Activated CD4-positive, alpha-beta memory T cell treated with anti-CD3 and anti-CD28 coated beads for 36 hours (primary cell): ENCODE measurements at regions of chr7 and their contacts with region 1.

Region 1: DNA sequence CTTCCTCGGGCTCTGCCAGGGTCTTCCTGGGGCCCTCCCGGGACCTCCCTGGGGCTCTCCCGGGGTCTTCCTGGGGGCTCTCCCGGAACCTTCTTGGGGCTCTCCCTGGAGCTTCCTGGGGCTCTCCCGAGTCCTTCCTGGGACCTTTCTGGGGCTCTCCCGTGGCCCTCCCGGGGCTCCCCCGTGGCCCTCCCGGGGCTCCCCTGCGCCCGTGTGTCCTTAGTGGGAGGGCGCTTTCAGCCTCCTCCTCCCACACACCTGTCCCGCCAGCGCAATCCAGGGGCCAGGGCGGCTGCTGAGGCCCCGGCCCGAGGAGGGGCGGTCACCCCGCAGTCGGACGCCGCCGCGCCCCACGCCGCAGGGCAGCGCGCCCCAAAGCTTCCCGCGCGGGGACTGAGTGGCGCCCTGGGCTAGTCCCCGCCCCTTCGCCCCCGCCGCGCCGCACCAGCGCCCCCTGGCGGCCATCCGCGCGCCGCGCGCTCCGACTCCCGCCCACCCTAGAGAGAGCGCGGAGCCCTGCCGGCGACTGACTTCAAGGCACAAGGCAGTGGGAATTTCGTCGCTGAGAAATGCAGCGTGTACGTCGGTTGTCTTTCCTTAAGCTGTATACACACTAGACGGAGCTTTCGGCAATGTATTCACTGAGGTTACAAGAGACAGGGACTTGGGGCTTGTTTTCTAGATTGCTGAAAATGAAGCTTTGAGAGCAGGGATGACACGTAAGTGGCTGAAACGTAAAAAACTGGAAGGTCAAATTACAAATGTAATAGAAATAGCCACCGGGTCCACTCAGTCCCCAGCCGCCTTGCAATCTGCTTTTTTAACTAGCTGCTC is 47.1 kb downstream of the INSIG1 start:
- DNase-seq: peak; percentile 85
- H3K4me3 Mint-ChIP-seq: peak overlapping the region; percentile 45
- H3K27ac Mint-ChIP-seq: no peak overlapping the region
- H3K4me1 Mint-ChIP-seq: peaks cover 7% of the 10 kb centered on the region
- H3K27me3 Mint-ChIP-seq: peaks cover 15% of the 10 kb centered on the region

Region 2: DNA sequence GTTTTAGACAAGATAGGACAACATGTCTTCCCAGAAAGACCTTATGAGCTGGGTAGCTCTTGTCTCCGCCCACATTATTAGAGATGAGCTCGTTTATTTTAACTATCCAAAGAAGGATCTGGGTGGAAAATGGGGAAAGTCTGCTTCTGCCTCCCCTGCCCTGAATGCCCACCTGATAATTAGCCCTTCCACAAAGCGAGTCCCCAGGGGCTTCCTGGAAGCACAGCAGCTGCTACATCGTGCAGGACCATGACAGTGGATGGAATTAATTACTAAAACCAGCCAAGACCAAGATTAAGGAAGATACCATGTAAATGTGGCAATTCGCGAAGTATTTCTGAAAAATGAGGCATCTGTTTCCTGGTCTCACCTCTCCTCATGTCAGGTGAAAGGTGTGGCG is 716.3 kb before region 1 on chr7:
- CTCF ChIA-PET with region 1: no interaction called
- POLR2A ChIA-PET with region 1: no interaction called
- intact Hi-C with region 1: no loop called
- DNase-seq: no peak
- H3K4me3 Mint-ChIP-seq: no peak overlapping the region
- H3K27ac Mint-ChIP-seq: no peak overlapping the region
- H3K4me1 Mint-ChIP-seq: no peaks in the 10 kb centered on the region
- H3K27me3 Mint-ChIP-seq: no peaks in the 10 kb centered on the region

Region 3: DNA sequence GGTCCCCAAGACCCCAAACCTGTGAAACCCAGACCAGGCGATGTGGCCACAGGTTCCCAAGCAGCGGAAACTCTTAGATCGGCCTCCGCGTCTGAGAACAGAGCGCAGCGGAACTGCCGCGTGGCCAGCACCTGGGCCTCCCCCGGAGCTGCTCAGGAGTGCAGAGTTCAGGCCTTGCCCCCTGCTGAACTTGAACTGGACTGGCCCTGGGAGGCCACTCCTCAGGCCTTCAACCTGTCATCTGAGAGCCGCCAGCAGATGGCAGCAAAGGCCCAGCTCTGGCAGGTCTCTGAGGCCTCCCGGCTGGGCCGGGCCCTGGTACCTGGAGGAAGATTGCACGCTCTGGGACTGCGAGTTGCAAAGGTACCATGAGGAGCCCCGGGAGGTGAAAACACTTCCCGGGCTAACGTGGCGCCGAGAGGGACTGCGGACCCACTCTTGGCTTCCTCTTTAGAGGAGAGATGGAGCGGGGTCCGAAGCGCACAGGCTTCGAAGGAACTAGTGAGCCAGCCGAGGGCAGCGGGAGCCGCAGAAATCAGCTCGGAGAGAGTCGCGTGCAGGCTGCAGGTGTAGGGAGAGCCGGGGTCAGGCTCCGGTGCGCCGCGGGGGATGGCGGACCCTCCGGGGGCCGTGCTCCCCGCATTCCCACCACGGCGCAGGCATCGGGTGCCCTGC is 431.0 kb before region 1 on chr7:
- CTCF ChIA-PET with region 1: interaction called, 22 read pairs
- POLR2A ChIA-PET with region 1: no interaction called
- intact Hi-C with region 1: no loop called
- DNase-seq: peak; percentile 90
- H3K4me3 Mint-ChIP-seq: peak overlapping the region; percentile 59
- H3K27ac Mint-ChIP-seq: no peak overlapping the region
- H3K4me1 Mint-ChIP-seq: peaks cover 4% of the 10 kb centered on the region
- H3K27me3 Mint-ChIP-seq: peaks cover 28% of the 10 kb centered on the region

Region 4: GRCh38 chr7:155003376-155004214 is 341.2 kb before region 1 on chr7:
- CTCF ChIA-PET with region 1: interaction called, 6 read pairs
- POLR2A ChIA-PET with region 1: no interaction called
- intact Hi-C with region 1: loop called (anchors 5 kb)
- DNase-seq: peak; percentile 89
- H3K4me3 Mint-ChIP-seq: peak overlapping the region; percentile 89
- H3K27ac Mint-ChIP-seq: peak overlapping the region; percentile 91
- H3K4me1 Mint-ChIP-seq: peaks cover 12% of the 10 kb centered on the region
- H3K27me3 Mint-ChIP-seq: no peaks in the 10 kb centered on the region

Region 5: DNA sequence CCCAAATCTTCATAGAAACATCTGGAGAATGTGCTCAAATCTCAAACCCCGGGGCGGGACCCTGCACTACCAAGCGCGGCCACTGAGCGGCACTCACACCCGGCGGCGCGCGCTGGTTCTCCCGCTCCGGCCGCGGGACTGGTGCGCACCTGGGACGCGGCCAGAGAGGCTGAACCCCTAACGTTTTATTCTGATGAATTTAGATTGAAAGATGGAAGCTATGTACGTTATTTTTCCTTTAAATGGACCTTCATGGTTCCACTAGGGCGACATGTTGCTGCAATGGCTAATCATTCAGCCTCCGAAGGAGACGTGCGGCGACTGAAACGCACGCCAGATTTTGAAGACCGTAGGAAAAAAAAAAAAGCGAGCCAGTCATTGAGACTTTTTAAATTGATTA is 154.1 kb before region 1 on chr7:
- CTCF ChIA-PET with region 1: interaction called, 38 read pairs
- POLR2A ChIA-PET with region 1: no interaction called
- intact Hi-C with region 1: loop called (anchors 1 kb)
- DNase-seq: peak; percentile 76
- H3K4me3 Mint-ChIP-seq: no peak overlapping the region
- H3K27ac Mint-ChIP-seq: no peak overlapping the region
- H3K4me1 Mint-ChIP-seq: peaks cover 28% of the 10 kb centered on the region
- H3K27me3 Mint-ChIP-seq: peaks cover 4% of the 10 kb centered on the region

Region 6: GRCh38 chr7:155205368-155206317 is 139.2 kb before region 1 on chr7:
- CTCF ChIA-PET with region 1: interaction called, 20 read pairs
- POLR2A ChIA-PET with region 1: interaction called, 4 read pairs
- intact Hi-C with region 1: loop called (anchors 1 kb)
- DNase-seq: peak; percentile 96
- H3K4me3 Mint-ChIP-seq: peak overlapping the region; percentile 75
- H3K27ac Mint-ChIP-seq: peak overlapping the region; percentile 100
- H3K4me1 Mint-ChIP-seq: peaks cover 45% of the 10 kb centered on the region
- H3K27me3 Mint-ChIP-seq: no peaks in the 10 kb centered on the region

Region 7: DNA sequence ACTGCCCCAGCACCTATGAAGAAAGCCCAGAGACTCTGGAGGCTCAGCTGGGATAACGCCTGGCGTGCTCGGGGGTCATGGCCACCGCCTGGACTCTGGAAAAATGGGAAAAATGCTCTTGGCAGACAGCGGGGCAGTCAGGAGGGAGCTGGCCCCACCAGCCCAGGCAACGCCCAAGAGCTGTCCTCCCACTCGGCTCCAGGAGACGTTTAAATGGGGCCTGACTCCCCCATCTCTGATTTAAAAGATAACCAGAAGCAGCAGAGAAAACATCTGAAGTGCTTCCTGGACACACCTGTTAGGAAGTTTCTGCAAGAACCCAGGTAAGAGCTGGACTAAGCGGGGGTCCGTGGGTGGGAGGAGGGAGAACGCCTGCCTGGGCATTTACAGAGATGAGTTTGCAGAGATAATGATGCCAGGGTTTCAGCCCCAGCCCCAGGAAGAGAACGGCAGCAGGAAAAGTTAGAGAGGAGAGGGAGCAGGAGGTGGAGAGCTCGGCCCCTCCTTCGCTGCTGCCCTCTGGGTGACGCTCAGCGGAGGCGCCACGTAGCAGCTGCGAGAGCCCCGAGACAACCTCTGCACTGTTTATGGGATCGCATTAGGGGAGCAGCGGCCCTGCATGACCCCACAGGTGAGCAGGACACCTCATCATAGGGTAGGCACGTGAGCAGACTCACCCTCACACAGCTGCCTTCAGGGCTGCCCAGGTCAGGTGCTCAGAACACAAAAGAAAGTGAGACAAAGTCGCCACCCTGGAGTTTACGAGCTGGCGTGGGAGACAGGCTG is 130.7 kb before region 1 on chr7:
- CTCF ChIA-PET with region 1: interaction called, 10 read pairs
- POLR2A ChIA-PET with region 1: no interaction called
- intact Hi-C with region 1: no loop called
- DNase-seq: no peak
- H3K4me3 Mint-ChIP-seq: no peak overlapping the region
- H3K27ac Mint-ChIP-seq: no peak overlapping the region
- H3K4me1 Mint-ChIP-seq: peaks cover 29% of the 10 kb centered on the region
- H3K27me3 Mint-ChIP-seq: peaks cover 5% of the 10 kb centered on the region

Region 8: GRCh38 chr7:155283565-155284194 is 61.1 kb before region 1 on chr7:
- CTCF ChIA-PET with region 1: interaction called, 4 read pairs
- POLR2A ChIA-PET with region 1: no interaction called
- intact Hi-C with region 1: loop called (anchors 5 kb)
- DNase-seq: peak; percentile 61
- H3K4me3 Mint-ChIP-seq: no peak overlapping the region
- H3K27ac Mint-ChIP-seq: peak overlapping the region; percentile 58
- H3K4me1 Mint-ChIP-seq: peaks cover 44% of the 10 kb centered on the region
- H3K27me3 Mint-ChIP-seq: peaks cover 24% of the 10 kb centered on the region